ENCODE measurements at regions of chr21 and their contacts with region 1.

Region 1: DNA sequence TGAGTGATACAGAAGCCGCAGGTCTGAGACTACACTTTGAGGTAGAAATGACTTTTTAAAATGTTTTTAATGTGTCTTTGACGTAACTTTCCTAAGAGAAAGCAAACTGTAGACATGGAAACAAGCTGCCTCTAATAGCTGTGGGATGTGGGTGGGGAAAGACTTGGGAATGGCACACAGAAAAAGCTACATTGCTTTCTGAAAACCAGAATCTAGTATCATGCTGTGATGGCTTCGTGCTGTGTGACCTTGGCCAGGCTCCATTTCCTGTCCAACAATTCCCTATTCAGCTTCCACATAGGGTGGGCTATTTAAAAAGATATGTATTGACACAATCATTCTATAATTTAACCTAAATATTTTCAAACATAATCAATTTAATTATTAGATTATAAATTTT is 909.1 kb downstream of the NCAM2 start:
- H3K4me3 ChIP-seq: no peak overlapping the region
- H3K27ac ChIP-seq: no peak overlapping the region
- H3K4me1 ChIP-seq: no peaks in the 10 kb centered on the region
- CTCF ChIP-seq: no peak

Region 2: DNA sequence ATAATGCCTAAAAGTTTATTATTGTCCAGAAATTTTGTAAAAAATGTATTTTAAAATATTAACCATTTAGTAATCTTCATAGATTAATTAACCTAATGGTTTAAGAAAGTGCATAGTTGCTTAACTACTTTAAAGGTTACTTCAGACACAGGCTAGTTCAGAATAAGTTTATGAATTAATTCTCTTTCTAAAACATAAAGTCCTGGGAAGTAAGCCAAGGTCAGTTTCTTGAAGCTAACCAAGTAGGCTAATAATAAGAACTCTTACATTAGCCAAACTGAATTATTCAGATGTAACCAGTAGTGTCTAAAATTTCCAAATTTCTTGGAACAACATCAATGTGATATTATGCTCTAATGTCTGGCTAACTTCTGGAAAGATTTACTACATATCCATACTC is 118.7 kb before region 1 on chr21:
- CTCF ChIA-PET with region 1: no interaction called
- POLR2A ChIA-PET with region 1: no interaction called
- H3K4me3 ChIP-seq: no peak overlapping the region
- H3K27ac ChIP-seq: no peak overlapping the region
- H3K4me1 ChIP-seq: no peaks in the 10 kb centered on the region
- CTCF ChIP-seq: no peak

Region 3: DNA sequence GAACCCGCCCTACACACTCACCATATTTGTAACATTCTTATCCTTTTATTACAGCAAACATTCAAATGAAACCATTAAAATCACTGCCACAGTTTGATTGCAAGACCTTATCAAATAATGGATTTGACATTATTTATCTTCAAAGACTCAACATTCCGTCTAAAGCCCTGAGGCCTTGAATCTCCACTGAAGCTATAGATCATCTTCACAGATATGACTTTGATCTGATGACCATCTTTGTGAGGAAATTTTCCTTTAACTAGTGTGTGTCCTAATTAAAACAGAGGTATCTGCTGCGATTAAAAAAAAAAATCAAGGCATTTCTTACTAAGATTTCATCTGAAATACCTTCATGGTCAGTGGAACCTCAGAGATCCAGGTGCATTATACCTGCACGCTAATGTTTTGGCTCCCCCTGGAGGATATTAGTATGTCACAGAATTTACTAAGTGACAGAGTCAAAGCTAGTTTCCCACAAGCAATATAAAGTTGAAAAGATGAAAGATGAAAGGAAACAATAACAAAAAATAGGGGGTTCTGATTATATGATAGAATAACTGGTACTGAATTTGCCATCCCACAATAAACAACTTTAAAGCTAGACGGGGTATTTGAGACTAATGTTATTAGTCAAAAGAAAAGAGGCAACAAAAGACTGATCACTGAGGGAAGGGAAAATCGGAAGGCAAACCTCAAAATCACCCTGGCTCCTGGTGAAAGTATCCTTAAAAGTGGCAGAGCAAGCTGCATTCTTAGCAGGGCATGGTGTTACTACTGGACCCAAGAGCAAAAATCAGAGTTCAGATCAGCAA is 14.4 kb after region 1 on chr21:
- CTCF ChIA-PET with region 1: interaction called, 11 read pairs
- POLR2A ChIA-PET with region 1: no interaction called
- H3K4me3 ChIP-seq: no peak overlapping the region
- H3K27ac ChIP-seq: no peak overlapping the region
- H3K4me1 ChIP-seq: no peaks in the 10 kb centered on the region
- CTCF ChIP-seq: no peak

Measured in HEK293 (cell line).